A549 (cell line): ENCODE measurements at regions of chr9 and their contacts with region 1.

Region 1: DNA sequence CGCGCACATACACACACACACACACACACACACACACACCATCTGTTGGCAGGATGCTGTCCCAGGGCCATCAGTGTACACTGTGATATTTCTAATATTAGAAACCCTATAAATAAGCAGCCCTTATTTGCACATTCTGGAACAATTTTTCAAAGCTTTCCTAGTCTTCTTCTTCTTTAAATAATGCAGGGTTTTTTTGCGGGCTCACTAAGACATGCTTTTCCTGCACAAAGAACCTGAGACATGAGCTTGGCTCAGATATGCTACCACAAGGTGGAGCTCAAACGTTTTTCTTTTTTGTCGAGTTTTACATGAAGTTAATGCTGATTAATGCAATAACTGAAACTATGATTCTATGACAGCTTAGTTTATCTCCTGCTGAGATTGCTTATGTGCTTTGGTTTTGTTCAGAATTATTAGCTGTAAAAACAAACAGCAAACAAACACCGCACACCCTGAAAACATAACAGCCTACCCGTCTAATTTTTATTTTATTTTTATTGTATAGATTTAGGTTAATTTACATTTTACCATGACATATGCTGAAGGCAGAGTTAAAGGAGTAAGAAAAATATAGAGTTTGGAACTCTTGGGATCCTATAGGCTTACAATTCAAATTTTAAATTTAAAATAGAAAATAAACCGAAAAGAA is 95.8 kb downstream of the ALDH1A1 start:
- DNase-seq: peak; percentile 66 to 92
- ATAC-seq: peak; percentile 75
- H3K4me3 ChIP-seq: no peak overlapping the region
- H3K27ac ChIP-seq: peak overlapping the region; percentile 92 to 93
- H3K4me1 ChIP-seq: peaks cover 43% of the 10 kb centered on the region
- CTCF ChIP-seq: peak; percentile 82
- EP300 ChIP-seq: no peak
- POLR2A ChIP-seq: no peak
- RAD21 ChIP-seq: peak; percentile 80 to 82

Region 2: DNA sequence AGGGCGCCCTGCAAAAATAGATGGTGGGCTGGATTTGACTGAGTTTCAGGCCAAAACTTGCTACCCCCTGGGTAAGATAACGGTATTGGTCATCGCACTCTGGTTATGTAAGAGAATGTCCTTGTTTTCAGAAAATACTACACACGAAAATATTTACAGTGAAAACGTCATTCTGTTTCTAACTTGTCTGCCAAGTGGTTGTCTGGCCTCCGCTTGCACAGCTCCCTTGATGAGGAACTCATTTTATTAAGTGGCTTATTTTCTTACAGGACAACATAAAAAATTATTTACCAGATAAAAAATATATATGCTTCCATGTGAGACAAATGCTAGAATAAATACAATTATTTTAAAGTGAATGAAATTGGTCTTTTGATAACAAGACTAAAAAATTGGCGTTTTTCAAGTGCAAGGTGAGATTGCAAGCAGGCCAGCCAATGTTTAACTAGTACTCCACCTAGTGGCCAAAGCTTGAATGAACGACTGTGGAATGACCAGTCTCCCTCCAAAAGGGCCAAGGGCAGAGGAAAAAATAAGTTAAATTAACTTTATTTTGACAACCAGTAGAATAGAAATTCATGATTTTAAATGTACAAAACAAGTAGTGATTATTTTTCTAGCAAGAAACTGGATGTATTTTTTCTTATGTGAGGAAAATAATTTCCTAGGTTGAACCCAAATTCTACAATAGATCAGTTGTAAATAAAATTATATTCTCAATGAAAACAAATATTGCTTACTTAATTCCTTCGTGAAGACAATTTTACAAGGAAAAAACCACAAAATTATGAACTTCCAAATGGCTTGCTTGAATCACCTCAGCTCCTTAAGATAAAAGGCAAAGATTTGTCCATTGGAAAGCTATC is 585.3 kb before region 1 on chr9:
- CTCF ChIA-PET with region 1: interaction called, 11 read pairs
- POLR2A ChIA-PET with region 1: no interaction called
- DNase-seq: peak; percentile 64 to 76
- ATAC-seq: peak; percentile 76 to 90; a peak in 4 of 6 replicates
- H3K4me3 ChIP-seq: no peak overlapping the region
- H3K27ac ChIP-seq: no peak overlapping the region
- H3K4me1 ChIP-seq: no peaks in the 10 kb centered on the region
- CTCF ChIP-seq: peak; percentile 89
- EP300 ChIP-seq: no peak
- POLR2A ChIP-seq: no peak
- RAD21 ChIP-seq: peak; percentile 83 to 89

Region 3: GRCh38 chr9:72843520-72844439 is 13.3 kb before region 1 on chr9:
- CTCF ChIA-PET with region 1: interaction called, 41 read pairs
- POLR2A ChIA-PET with region 1: no interaction called
- DNase-seq: peak; percentile 47 to 77
- ATAC-seq: peak; percentile 98
- H3K4me3 ChIP-seq: no peak overlapping the region
- H3K27ac ChIP-seq: peak overlapping the region; percentile 65 to 74
- H3K4me1 ChIP-seq: peaks cover 18% of the 10 kb centered on the region
- CTCF ChIP-seq: peak; percentile 31; the same call in 1 of the 3 replicates
- EP300 ChIP-seq: no peak
- POLR2A ChIP-seq: no peak
- RAD21 ChIP-seq: peak; percentile 47 to 77; a peak in 4 of 5 replicates

Region 4: GRCh38 chr9:73183917-73184861 is 327.1 kb after region 1 on chr9:
- CTCF ChIA-PET with region 1: interaction called, 13 read pairs
- POLR2A ChIA-PET with region 1: no interaction called
- DNase-seq: peak in 1 of 2 experiments; percentile 65
- ATAC-seq: no peak
- H3K4me3 ChIP-seq: 0 out of 3 replicates have a peak overlapping the region, but pooled peaks have one; percentile 39
- H3K27ac ChIP-seq: peak overlapping the region; percentile 85 to 88
- H3K4me1 ChIP-seq: peaks cover 55% of the 10 kb centered on the region
- CTCF ChIP-seq: peak; percentile 66; the same call in 2 of the 3 replicates
- EP300 ChIP-seq: no peak
- POLR2A ChIP-seq: no peak
- RAD21 ChIP-seq: peak; percentile 80 to 89